Activated CD4-positive, alpha-beta memory T cell treated with anti-CD3 and anti-CD28 coated beads for 36 hours (primary cell): ENCODE measurements at regions of chr4 and their contacts with region 1.

Region 1: DNA sequence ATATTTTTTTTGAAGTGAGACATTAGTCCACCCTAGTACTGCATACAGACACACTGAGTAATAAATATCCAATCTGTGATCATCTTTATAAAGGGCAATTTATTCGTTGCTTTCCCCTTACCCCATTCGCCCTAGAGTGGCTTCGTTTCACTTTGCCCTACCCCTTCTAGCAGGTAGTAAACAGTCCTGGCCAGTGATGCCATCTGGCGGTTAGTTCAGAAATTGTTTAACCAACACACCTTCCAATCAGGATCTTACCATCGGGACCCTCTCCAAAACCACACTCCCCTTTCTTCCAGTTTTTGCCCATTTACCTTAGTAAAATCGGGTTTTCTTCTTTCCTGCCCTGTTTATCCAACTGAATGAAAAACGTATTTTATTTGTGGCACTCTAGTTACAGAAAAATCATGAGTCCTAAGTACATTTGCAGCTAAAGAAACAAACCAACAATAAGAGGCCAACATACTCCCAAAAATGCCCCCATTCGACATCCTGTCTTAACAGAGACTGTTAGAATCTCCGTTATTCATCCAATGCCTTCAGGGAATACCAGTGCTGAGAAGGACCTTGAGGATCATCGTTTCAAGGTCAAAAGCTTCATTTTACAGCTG is 2.2 kb downstream of the PPA2 start:
- DNase-seq: peak; percentile 78
- H3K4me3 Mint-ChIP-seq: peak overlapping the region; percentile 99
- H3K27ac Mint-ChIP-seq: peak overlapping the region; percentile 99
- H3K4me1 Mint-ChIP-seq: peaks cover 51% of the 10 kb centered on the region
- H3K27me3 Mint-ChIP-seq: no peaks in the 10 kb centered on the region

Region 2: DNA sequence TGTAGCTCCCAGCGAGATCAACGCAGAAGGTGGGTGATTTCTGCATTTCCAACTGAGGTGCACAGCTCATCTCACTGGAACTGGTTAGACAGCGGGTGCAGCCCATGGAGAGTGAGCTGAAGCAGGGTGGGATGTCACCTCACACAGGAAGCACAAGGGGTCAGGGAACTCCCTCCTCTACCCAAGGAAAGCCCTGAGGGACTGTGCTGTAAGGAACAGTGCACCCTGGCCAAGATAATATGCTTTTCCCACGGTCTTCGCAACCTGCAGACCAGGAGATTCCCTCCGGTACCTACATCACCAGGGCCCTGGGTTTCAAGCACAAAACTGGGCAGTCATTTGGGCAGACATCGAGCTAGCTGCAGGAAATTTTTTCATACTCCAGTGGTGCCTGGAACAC is 541.4 kb before region 1 on chr4:
- CTCF ChIA-PET with region 1: interaction called, 4 read pairs
- POLR2A ChIA-PET with region 1: no interaction called
- intact Hi-C with region 1: loop called (anchors 1 kb)
- DNase-seq: no peak
- H3K4me3 Mint-ChIP-seq: no peak overlapping the region
- H3K27ac Mint-ChIP-seq: no peak overlapping the region
- H3K4me1 Mint-ChIP-seq: peaks cover 30% of the 10 kb centered on the region
- H3K27me3 Mint-ChIP-seq: no peaks in the 10 kb centered on the region

Region 3: DNA sequence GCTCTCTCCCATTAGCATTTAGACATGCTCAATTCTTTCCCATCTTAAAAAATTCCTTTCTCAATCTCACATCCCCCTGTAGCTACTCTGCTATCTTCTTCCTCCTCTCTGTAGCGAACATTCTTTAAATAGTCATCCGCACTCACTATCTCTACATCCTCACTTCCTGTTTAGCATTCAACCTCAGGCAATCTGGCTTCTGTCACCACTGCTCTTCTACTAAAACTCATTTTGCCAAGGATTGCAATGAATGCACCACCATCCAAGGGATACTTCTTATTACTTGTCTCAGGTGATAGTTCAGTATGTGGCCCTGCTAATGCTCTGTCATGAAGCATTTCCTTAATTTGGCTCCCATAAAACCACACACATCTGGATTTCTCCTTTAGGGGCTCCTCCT is 335.9 kb before region 1 on chr4:
- CTCF ChIA-PET with region 1: interaction called, 13 read pairs
- POLR2A ChIA-PET with region 1: interaction called, 6 read pairs
- intact Hi-C with region 1: no loop called
- DNase-seq: no peak
- H3K4me3 Mint-ChIP-seq: no peak overlapping the region
- H3K27ac Mint-ChIP-seq: no peak overlapping the region
- H3K4me1 Mint-ChIP-seq: peaks cover 28% of the 10 kb centered on the region
- H3K27me3 Mint-ChIP-seq: no peaks in the 10 kb centered on the region

Region 4: DNA sequence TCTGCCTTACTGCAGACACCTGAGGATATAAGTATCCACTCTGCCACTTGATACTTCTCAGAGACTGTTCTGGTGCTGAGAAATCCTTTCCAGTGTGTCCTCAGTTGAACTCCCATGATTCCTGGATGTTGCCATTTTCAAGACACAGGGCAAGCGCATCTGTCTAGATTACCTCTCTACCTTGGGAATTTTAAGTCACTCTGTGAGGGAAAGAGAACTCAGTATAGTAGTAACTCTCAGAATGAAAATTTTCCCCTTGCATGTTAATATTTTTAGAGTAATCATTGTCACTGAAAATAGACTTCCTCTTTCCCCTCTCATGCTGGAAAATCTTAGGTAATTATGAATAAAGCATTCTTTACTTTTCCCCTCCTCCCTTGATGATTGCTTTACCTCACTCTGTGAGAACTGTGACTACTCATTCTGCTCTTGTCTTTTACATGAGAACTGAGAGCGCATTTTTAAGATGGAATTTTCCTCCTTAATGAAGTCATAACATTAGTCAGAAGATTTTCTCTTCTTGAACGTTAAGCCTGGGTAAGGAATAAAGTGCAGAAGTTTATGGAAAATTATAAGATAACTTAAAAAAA is 280.0 kb before region 1 on chr4:
- CTCF ChIA-PET with region 1: interaction called, 9 read pairs
- POLR2A ChIA-PET with region 1: interaction called, 7 read pairs
- intact Hi-C with region 1: loop called (anchors 1 kb)
- DNase-seq: no peak
- H3K4me3 Mint-ChIP-seq: no peak overlapping the region
- H3K27ac Mint-ChIP-seq: peak overlapping the region; percentile 83
- H3K4me1 Mint-ChIP-seq: peaks cover 87% of the 10 kb centered on the region
- H3K27me3 Mint-ChIP-seq: no peaks in the 10 kb centered on the region

Region 5: GRCh38 chr4:105434940-105435339 is 36.7 kb before region 1 on chr4:
- CTCF ChIA-PET with region 1: no interaction called
- POLR2A ChIA-PET with region 1: no interaction called
- intact Hi-C with region 1: no loop called
- DNase-seq: no peak
- H3K4me3 Mint-ChIP-seq: no peak overlapping the region
- H3K27ac Mint-ChIP-seq: no peak overlapping the region
- H3K4me1 Mint-ChIP-seq: peaks cover 6% of the 10 kb centered on the region
- H3K27me3 Mint-ChIP-seq: no peaks in the 10 kb centered on the region

Region 6: DNA sequence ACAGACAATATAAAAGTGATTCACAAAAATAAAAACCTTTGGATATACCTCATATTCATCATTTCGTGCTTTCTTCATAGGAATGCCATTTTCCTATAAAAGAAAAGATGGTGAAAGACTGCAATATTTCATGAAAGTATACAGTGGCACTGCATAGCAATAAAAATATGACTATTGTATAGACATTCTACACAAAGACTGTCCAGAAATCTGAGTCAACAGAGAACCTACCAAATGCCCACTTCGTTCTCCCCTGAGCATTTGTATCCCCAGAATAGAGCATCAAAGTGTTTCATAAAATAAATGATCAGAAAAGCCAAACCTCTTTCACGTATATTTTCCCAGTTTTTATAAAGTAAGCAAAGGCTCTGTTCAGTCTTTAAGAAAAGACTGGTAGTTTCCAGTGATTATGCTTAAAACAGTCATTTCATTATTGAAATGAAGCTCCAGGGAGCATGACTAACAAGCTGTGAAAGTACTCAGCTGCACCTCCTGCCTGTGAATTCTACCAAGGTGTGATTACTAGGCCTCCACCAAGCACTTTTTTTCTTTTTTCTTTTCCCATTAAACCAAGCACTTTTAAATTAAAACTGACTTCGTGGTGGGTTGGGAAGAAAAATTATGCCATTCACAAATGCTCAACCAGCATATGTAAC is 18.0 kb before region 1 on chr4:
- CTCF ChIA-PET with region 1: interaction called, 21 read pairs
- POLR2A ChIA-PET with region 1: interaction called, 6 read pairs
- intact Hi-C with region 1: loop called (anchors 1 kb)
- DNase-seq: peak; percentile 51
- H3K4me3 Mint-ChIP-seq: no peak overlapping the region
- H3K27ac Mint-ChIP-seq: peak overlapping the region; percentile 69
- H3K4me1 Mint-ChIP-seq: peaks cover 38% of the 10 kb centered on the region
- H3K27me3 Mint-ChIP-seq: no peaks in the 10 kb centered on the region

Region 7: GRCh38 chr4:105708530-105709391 is 237.1 kb after region 1 on chr4 and contains the starts of genes GSTCD and INTS12:
- CTCF ChIA-PET with region 1: interaction called, 3 read pairs
- POLR2A ChIA-PET with region 1: no interaction called
- intact Hi-C with region 1: loop called (anchors 1 kb)
- DNase-seq: peak; percentile 93
- H3K4me3 Mint-ChIP-seq: peak within 1 kb of the TSS; percentile 98
- H3K27ac Mint-ChIP-seq: peak within 1 kb of the TSS; percentile 86
- H3K4me1 Mint-ChIP-seq: peaks cover 27% of the 10 kb centered on the region
- H3K27me3 Mint-ChIP-seq: no peaks in the 10 kb centered on the region
- total RNA-seq, gene GSTCD: 15.2 to 16.7 TPM
- total RNA-seq, gene INTS12: 19.6 to 22.7 TPM